Activated CD4-positive, alpha-beta T cell treated with anti-CD3 and anti-CD28 coated beads, Interleukin-2, amount 10 ng/mL, durations not matched to agents 24 days and 14 days (primary cell): ENCODE measurements at regions of chr17 and their contacts with region 1.

Region 1: DNA sequence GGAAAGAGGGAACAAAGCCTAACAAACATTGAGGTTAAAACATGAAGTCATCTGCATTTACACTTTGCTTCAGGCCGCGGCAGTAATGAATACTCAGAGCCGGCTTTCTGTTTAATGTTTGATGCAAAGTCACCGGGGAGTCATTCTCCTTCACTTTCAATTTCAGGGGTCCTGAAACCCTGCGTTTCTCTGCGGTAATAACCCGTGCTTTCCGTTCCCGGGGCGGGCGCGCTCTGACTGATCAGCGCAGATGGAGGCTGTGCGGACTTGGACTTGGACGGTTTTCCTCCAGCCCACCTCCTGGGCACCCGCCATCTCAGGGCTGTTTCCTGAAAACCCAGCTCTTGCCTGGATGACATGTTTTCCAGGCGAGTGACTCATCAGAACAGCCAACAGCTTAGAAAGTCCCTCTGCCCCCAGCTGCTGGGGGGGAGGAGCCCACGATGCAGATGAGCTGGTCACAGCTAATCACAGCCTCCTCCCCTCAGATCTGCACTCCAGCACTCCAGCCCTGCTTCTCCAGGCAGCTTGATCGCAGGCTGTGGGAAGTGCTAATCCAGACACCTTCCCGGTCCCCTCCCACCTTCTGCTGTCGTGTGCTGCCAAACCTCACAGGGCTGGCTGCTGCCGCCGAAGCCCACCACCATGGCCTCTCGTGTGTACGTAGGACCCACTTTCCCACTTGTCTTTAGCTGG is 158.6 kb upstream of the CHMP6 start:
- DNase-seq: peak; percentile 95
- H3K4me3 Mint-ChIP-seq: peak overlapping the region; percentile 85
- H3K27ac Mint-ChIP-seq: peak overlapping the region; percentile 96
- H3K4me1 Mint-ChIP-seq: peaks cover 61% of the 10 kb centered on the region
- H3K27me3 Mint-ChIP-seq: no peaks in the 10 kb centered on the region

Region 2: DNA sequence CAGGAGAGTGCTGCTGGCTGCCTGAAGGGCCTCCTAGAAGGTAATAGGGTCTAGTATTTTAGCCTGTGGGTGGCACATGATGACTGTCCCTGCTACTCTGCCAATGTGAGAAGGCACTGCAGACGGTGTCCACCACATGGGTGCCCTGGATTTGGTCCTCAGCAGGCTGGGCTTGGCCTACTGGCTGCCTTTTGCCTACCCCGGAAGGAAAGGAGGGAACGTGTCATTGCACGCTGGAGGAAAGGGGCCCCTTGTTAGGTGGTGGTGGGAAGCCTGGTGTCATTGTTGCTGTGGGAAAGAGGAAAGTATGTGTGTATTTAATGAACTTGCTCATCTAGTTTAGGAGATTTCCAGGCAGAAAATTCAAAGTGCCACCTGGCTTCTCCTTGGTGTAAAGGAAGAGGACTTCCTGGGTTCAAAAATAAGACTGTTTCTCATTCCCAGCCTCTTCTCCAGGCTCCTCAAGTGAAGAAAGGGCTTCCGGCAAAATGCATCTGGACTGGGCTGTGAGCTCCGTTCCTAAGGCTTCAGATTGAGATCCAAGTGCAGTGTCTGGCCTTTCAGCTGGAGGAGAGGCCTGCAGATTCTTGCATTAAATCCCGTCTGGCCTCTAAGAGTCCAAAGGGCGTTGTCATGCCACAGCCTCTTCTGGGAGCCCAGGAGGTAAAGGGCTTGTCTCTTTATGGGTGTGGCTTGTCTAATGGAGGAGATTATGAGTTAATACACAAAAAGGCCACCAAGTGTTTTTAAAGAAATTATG is 233.3 kb before region 1 on chr17:
- intact Hi-C with region 1: loop called (anchors 10 kb)
- DNase-seq: no peak
- H3K4me3 Mint-ChIP-seq: peak overlapping the region; percentile 18
- H3K27ac Mint-ChIP-seq: peak overlapping the region; percentile 56
- H3K4me1 Mint-ChIP-seq: peaks cover 69% of the 10 kb centered on the region
- H3K27me3 Mint-ChIP-seq: no peaks in the 10 kb centered on the region

Region 3: GRCh38 chr17:80761110-80761871 is 71.7 kb before region 1 on chr17:
- intact Hi-C with region 1: loop called (anchors 1 kb)
- DNase-seq: peak; percentile 91
- H3K4me3 Mint-ChIP-seq: peak overlapping the region; percentile 76
- H3K27ac Mint-ChIP-seq: peak overlapping the region; percentile 99
- H3K4me1 Mint-ChIP-seq: peaks cover 75% of the 10 kb centered on the region
- H3K27me3 Mint-ChIP-seq: no peaks in the 10 kb centered on the region

Region 4: GRCh38 chr17:80780381-80781198 is 52.4 kb before region 1 on chr17:
- intact Hi-C with region 1: loop called (anchors 2 kb)
- DNase-seq: peak; percentile 83
- H3K4me3 Mint-ChIP-seq: peak overlapping the region; percentile 82
- H3K27ac Mint-ChIP-seq: peak overlapping the region; percentile 92
- H3K4me1 Mint-ChIP-seq: peaks cover 79% of the 10 kb centered on the region
- H3K27me3 Mint-ChIP-seq: no peaks in the 10 kb centered on the region

Region 5: DNA sequence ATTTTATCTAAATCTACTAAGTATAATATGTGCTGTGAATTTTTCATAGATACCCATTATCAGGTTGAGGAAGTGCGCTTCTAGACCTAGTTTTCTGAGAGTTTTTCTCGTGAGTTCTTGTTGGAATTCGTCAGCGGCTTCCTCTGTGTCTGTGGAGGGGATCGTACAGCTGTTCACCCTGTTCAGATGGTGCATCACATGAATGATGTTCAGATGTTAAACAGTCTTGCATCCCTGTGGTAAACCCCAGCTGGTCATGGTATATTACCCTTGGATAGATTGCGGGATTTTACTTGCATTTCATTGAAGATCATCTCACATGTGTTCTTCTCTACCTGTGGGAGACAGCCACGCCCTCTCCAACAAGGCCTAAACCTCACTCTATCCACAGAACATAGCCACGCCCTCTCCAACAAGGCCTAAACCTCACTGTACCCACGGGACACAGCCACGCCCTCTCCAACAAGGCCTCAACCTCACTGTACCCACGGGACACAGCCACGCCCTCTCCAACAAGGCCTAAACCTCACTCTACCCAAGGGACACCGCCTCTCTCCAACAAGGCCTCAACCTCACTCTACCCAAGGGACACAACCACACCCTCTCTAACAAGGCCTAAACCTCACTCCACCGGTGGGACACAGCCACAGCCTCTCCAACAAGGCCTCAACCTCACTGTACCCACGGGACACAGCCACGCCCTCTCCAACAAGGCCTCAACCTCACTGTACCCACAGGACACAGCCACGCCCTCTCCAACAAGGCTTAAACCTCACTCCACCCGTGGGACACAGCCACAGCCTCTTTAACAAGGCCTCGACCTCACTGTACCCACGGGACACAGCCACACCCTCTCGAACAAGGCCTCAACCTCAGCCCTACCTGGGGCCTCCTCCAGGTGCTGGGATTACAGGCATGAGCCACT is 21.6 kb before region 1 on chr17:
- intact Hi-C with region 1: loop called (anchors 2 kb)
- DNase-seq: peak; percentile 76
- H3K4me3 Mint-ChIP-seq: peak overlapping the region; percentile 58
- H3K27ac Mint-ChIP-seq: peak overlapping the region; percentile 96
- H3K4me1 Mint-ChIP-seq: peaks cover 56% of the 10 kb centered on the region
- H3K27me3 Mint-ChIP-seq: no peaks in the 10 kb centered on the region

Region 6: GRCh38 chr17:80855948-80856862 is 23.2 kb after region 1 on chr17:
- intact Hi-C with region 1: loop called (anchors 1 kb)
- DNase-seq: peak; percentile 95
- H3K4me3 Mint-ChIP-seq: peak overlapping the region; percentile 62
- H3K27ac Mint-ChIP-seq: peak overlapping the region; percentile 91
- H3K4me1 Mint-ChIP-seq: peaks cover 73% of the 10 kb centered on the region
- H3K27me3 Mint-ChIP-seq: no peaks in the 10 kb centered on the region

Region 7: DNA sequence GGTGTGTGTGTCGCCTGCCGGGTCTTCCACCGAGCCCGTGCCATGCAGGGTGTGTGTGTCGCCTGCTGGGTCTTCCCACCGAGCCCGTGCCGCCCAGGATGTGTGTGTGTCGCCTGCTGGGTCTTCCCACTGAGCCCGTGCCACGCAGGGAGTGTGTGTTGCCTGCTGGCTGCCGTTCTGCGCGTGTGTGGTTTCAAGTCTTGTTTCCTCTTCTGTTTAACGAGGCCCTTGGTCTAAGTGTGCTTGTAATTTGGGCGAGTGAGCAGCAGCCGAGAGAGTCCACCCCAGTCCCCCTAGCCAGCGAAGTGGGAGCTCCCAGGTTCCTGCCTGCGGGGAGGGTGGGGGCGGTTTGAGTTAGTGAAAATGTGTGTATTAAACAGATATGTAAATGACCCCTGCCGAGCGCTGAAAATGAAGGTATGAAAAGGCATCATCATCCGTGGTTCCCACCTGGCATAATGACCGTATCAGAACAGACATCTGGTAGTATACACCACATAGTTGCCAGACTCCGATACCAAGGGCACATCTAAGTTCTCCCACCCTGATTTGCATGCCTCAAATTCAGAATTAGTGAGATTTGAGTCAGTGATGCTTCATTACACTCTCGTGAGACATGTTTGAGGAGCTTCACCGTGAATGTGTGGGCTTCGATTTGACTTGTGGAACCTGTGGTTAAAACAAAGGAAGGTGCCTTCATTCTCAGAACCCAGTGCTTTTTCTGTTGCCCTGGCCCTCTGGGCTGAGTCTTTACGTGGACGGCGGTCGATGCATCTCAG is 44.1 kb after region 1 on chr17:
- intact Hi-C with region 1: loop called (anchors 1 kb)
- DNase-seq: peak; percentile 89
- H3K4me3 Mint-ChIP-seq: peak overlapping the region; percentile 88
- H3K27ac Mint-ChIP-seq: peak overlapping the region; percentile 99
- H3K4me1 Mint-ChIP-seq: peaks cover 57% of the 10 kb centered on the region
- H3K27me3 Mint-ChIP-seq: no peaks in the 10 kb centered on the region